ENCODE measurements at regions of chr13 and their contacts with region 1.

Region 1: GRCh38 chr13:95403828-95404522 is 102.7 kb upstream of the ABCC4 start:
- DNase-seq: peak; percentile 65
- H3K4me3 Mint-ChIP-seq: peak overlapping the region; percentile 92
- H3K27ac Mint-ChIP-seq: no peak overlapping the region
- H3K4me1 Mint-ChIP-seq: peaks cover 6% of the 10 kb centered on the region
- H3K27me3 Mint-ChIP-seq: peaks cover 2% of the 10 kb centered on the region

Region 2: GRCh38 chr13:94435604-94436226 is 968.3 kb before region 1 on chr13:
- intact Hi-C with region 1: loop called (anchors 2 kb)
- DNase-seq: no peak
- H3K4me3 Mint-ChIP-seq: no peak overlapping the region
- H3K27ac Mint-ChIP-seq: no peak overlapping the region
- H3K4me1 Mint-ChIP-seq: peaks cover 15% of the 10 kb centered on the region
- H3K27me3 Mint-ChIP-seq: peaks cover 5% of the 10 kb centered on the region

Region 3: DNA sequence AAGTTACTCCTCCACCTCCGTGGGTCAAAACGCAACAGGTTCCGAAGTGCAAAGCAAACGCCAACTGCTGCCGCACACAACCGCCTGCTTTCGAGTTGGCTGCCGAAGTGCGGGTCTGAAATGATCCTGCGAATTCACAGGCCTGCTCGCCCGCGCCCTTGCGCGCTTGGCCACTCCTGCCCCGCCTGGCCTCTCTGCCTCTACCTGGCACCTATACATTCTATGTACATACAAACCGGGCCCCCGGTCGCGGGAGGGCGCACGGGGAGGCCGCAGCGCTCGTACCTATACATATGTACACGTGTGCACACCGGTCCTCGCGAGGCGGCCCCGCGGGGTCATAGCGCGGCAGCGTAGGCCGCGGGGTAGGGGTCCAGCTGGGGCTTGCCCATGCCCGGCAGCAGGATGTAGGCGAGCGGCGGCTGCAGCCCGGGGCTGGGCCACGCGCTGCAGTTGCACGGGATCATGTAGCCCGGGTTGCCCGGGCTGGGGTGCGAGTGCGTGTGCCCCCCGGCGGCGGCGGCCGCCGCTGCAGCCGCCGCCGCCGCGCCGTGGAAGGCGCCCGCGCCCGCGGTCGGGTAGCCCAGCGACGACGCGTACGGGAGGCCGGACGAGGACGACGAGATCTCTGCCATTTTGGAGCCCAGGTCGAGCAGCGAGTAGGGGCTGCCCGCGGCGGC is 693.0 kb before region 1 on chr13:
- intact Hi-C with region 1: loop called (anchors 2 kb)
- DNase-seq: no peak
- H3K4me3 Mint-ChIP-seq: no peak overlapping the region
- H3K27ac Mint-ChIP-seq: peak overlapping the region; percentile 73
- H3K4me1 Mint-ChIP-seq: peaks cover 10% of the 10 kb centered on the region
- H3K27me3 Mint-ChIP-seq: peaks cover 73% of the 10 kb centered on the region

Region 4: GRCh38 chr13:95191821-95192563 is 212.0 kb before region 1 on chr13:
- intact Hi-C with region 1: loop called (anchors 1 kb)
- DNase-seq: peak; percentile 24
- H3K4me3 Mint-ChIP-seq: no peak overlapping the region
- H3K27ac Mint-ChIP-seq: no peak overlapping the region
- H3K4me1 Mint-ChIP-seq: peaks cover 11% of the 10 kb centered on the region
- H3K27me3 Mint-ChIP-seq: no peaks in the 10 kb centered on the region

Region 5: DNA sequence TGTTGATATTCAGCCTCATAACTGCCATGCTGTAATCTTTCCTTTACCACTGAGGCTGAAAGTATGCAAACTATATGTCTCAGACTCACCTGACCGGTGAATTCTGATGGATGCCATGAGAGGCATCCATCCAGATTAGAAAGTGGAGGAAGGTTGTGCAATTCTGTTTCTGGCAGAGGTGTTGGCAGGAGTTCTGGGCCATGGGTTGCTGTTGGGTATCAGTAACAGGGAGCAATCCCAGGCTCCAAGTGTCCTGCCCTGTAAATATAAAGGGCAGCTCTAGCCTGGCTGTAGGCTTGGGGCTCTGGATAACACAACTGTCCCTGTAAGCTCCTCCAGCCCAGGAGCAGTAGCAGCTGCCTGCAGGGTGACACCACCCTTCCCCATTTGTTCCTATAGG is 25.4 kb before region 1 on chr13:
- intact Hi-C with region 1: loop called (anchors 1 kb)
- DNase-seq: no peak
- H3K4me3 Mint-ChIP-seq: no peak overlapping the region
- H3K27ac Mint-ChIP-seq: no peak overlapping the region
- H3K4me1 Mint-ChIP-seq: no peaks in the 10 kb centered on the region
- H3K27me3 Mint-ChIP-seq: peaks cover 5% of the 10 kb centered on the region

Region 6: GRCh38 chr13:95530178-95530577 is 126.2 kb after region 1 on chr13:
- intact Hi-C with region 1: no loop called
- DNase-seq: no peak
- H3K4me3 Mint-ChIP-seq: no peak overlapping the region
- H3K27ac Mint-ChIP-seq: no peak overlapping the region
- H3K4me1 Mint-ChIP-seq: peaks cover 3% of the 10 kb centered on the region
- H3K27me3 Mint-ChIP-seq: peaks cover 12% of the 10 kb centered on the region

Region 7: DNA sequence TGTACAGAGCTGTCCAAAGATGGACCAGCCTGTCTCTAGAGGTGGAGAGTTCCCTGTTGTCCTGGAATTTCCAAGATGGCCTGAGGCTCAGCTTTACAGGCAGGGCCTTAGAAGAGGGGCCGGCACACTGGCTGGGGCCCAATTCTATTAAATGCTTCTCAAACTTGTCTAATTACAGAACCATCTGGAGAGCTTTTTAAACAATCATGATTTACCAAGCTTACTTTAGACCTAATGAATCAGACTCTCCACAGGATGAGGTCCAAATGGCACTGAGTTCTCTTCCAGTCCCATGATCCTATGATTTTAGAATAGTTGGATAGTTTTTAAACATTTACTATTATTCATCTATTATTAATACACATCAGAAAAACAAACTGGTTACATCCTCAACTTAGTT is 396.5 kb after region 1 on chr13:
- intact Hi-C with region 1: no loop called
- DNase-seq: no peak
- H3K4me3 Mint-ChIP-seq: no peak overlapping the region
- H3K27ac Mint-ChIP-seq: no peak overlapping the region
- H3K4me1 Mint-ChIP-seq: no peaks in the 10 kb centered on the region
- H3K27me3 Mint-ChIP-seq: peaks cover 5% of the 10 kb centered on the region

Region 8: GRCh38 chr13:95834134-95834765 is 430.3 kb after region 1 on chr13:
- intact Hi-C with region 1: loop called (anchors 10 kb)
- DNase-seq: peak; percentile 38
- H3K4me3 Mint-ChIP-seq: no peak overlapping the region
- H3K27ac Mint-ChIP-seq: no peak overlapping the region
- H3K4me1 Mint-ChIP-seq: no peaks in the 10 kb centered on the region
- H3K27me3 Mint-ChIP-seq: peaks cover 15% of the 10 kb centered on the region